ENCODE measurements at regions of chr6 and their contacts with region 1.

Region 1: DNA sequence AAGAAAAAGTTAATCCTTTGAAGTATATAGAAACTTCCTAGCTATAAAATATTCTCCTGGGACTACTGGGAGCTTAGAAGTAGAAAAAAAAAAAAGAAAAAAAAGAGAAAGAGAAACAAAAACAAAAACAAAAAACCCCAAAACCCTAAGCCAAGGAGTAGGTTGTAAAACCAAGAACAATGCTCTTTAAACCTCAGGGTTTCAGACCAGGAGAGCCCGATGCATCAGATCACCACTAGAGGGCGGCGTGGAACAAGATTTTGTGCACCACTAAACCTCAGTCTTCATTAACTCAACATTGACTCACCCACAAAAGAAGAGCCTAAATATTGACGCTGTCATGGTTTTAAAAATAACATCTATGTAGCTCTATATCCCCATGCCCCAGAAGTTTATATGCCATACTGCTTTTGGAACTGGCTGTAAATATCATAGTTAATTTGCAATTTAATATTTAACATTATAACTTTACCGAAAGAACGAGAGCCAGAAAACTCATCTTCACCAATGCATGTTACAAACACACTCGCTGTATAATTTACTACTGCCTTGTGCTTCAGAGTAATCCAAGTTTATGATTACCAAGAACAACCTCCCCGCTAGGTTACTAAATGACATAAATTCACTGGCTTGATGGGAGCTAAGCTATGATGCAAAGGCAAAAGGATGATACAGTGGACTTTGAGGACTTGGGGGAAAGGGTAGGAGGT is 19.2 kb downstream of the MCUR1 start:
- DNase-seq: peak; percentile 76
- H3K4me3 Mint-ChIP-seq: no peak overlapping the region
- H3K27ac Mint-ChIP-seq: peak overlapping the region; percentile 77
- H3K4me1 Mint-ChIP-seq: peaks cover 24% of the 10 kb centered on the region
- H3K27me3 Mint-ChIP-seq: no peaks in the 10 kb centered on the region

Region 2: DNA sequence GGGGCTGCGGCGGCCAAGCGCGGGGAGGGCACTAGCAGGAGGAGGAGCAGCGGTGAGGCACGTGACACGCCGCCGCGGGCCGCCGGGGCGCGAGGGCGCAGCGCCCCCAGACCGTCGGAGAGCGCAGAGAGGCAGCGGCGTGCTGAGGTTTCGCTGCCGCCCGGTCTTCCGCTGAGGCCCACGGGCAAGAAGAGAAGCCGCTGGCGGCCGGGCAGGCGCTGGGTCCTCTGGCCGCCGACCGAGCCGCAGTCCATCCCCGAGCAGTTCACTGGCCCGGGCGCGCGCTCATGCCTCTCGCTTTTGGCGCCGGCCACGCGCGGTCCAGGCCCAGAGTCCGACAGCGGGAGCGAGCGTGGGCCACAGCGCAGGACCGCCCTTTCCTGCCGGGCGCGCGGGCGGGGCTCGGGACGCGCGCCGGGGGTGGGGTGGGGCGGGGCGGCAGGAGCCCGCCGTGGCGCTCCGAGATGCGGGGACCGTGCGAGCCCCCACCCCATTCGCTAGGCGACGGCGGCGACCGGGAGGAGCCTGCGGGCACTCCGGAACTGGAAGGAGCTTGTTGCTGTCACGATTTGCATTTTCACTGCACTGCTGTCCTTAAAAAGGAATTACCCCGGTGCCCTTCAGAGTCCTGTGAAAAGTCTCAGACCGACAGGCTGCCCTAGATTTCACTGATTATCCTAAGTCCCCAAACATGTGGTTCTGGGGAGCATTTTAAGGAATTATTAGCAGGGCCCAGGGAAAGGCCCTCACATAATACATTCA is 19.2 kb after region 1 on chr6 and contains the start of gene MCUR1:
- intact Hi-C with region 1: loop called (anchors 2 kb)
- DNase-seq: peak; percentile 81
- H3K4me3 Mint-ChIP-seq: peak within 1 kb of the TSS; percentile 90
- H3K27ac Mint-ChIP-seq: peak within 1 kb of the TSS; percentile 77
- H3K4me1 Mint-ChIP-seq: peaks cover 34% of the 10 kb centered on the region
- H3K27me3 Mint-ChIP-seq: peaks cover 11% of the 10 kb centered on the region
- total RNA-seq, gene MCUR1: 39.8 and 41.4 TPM in 2 replicates

Region 3: GRCh38 chr6:13873285-13874190 is 78.3 kb after region 1 on chr6:
- intact Hi-C with region 1: loop called (anchors 5 kb)
- DNase-seq: peak; percentile 51
- H3K4me3 Mint-ChIP-seq: peak overlapping the region; percentile 78
- H3K27ac Mint-ChIP-seq: no peak overlapping the region
- H3K4me1 Mint-ChIP-seq: peaks cover 15% of the 10 kb centered on the region
- H3K27me3 Mint-ChIP-seq: peaks cover 17% of the 10 kb centered on the region

Region 4: GRCh38 chr6:13916230-13916944 is 121.2 kb after region 1 on chr6:
- intact Hi-C with region 1: loop called (anchors 10 kb)
- DNase-seq: no peak
- H3K4me3 Mint-ChIP-seq: no peak overlapping the region
- H3K27ac Mint-ChIP-seq: no peak overlapping the region
- H3K4me1 Mint-ChIP-seq: peaks cover 6% of the 10 kb centered on the region
- H3K27me3 Mint-ChIP-seq: peaks cover 67% of the 10 kb centered on the region

Region 5: DNA sequence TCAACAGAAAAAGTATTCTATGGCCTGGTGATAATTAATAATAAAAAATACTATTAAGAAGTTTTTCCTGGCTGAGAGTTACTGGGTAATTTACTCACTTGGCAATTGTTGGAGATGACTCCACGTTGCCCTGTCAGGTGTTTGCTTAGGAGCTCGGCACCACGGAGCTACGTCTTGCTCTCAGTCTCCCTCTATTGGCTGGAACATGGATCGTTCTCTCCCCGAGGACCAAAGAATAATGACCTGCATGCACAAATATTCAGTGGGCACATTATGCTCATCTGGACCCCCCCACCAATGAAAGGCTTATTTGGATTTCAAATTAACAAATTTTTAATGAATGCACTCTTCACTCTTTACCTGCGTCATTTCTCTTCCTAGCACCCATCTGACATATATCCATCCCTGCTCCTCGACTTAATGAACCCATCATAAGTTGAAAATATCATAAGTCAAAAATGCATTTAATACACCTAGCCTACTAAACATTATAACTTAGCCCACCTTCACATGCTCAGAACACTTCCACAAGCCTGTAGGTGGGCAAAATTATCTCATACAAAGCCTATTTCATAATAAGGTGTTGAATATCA is 251.4 kb after region 1 on chr6:
- intact Hi-C with region 1: loop called (anchors 2 kb)
- DNase-seq: peak; percentile 31
- H3K4me3 Mint-ChIP-seq: no peak overlapping the region
- H3K27ac Mint-ChIP-seq: no peak overlapping the region
- H3K4me1 Mint-ChIP-seq: no peaks in the 10 kb centered on the region
- H3K27me3 Mint-ChIP-seq: peaks cover 48% of the 10 kb centered on the region